ENCODE measurements at regions of chr5 and their contacts with region 1.

Region 1: GRCh38 chr5:69234457-69235268 is at the start of gene CDK7:
- DNase-seq: peak; percentile 95 to 98
- ATAC-seq: peak; percentile 99
- H3K4me3 ChIP-seq: peak within 1 kb of the TSS; percentile 85
- H3K27ac ChIP-seq: peak within 1 kb of the TSS; percentile 92
- H3K4me1 ChIP-seq: peaks cover 29% of the 10 kb centered on the region
- H3K27me3 ChIP-seq: no peaks in the 10 kb centered on the region
- CTCF ChIP-seq: no peak
- total RNA-seq, gene CDK7: 19.0 to 33.4 (median 29.4) TPM

Region 2: DNA sequence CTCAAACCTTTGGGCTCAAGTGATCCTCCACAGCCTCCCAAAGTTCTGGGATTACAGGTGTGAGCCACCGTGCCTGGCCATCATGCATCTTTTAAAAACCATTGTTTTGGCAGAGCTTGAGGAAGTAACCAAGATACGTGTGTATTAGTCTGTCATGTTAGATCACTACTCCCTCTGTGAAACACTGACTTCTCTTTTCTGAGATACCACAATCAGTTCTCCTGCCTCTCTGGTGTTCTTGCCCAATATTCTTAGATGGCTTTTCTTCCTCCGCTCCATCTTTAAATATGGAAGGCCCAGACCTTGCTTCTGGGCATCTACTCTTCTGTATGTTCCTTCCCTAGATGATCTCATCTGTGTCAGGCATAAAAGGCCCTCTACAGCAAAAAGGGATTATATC is 81.9 kb before region 1 on chr5:
- intact Hi-C with region 1: no loop called
- DNase-seq: no peak
- ATAC-seq: no peak
- H3K4me3 ChIP-seq: no peak overlapping the region
- H3K27ac ChIP-seq: no peak overlapping the region
- H3K4me1 ChIP-seq: no peaks in the 10 kb centered on the region
- H3K27me3 ChIP-seq: no peaks in the 10 kb centered on the region
- CTCF ChIP-seq: no peak

Region 3: GRCh38 chr5:69217548-69218526 is 16.8 kb before region 1 on chr5:
- intact Hi-C with region 1: loop called in 1 of 2 experiments (anchors 2 kb)
- DNase-seq: peak; percentile 98
- ATAC-seq: peak; percentile 98 to 99 (median 98)
- H3K4me3 ChIP-seq: peak overlapping the region; percentile 92
- H3K27ac ChIP-seq: peak overlapping the region; percentile 91
- H3K4me1 ChIP-seq: peaks cover 14% of the 10 kb centered on the region
- H3K27me3 ChIP-seq: no peaks in the 10 kb centered on the region
- CTCF ChIP-seq: peak; percentile 26